Mammary epithelial cell (primary cell): ENCODE measurements at regions of chr10 and their contacts with region 1.

Region 1: GRCh38 chr10:95430231-95430951 is 130.8 kb downstream of the SORBS1 start:
- DNase-seq: peak; percentile 62
- H3K4me3 ChIP-seq: no peak overlapping the region
- H3K27ac ChIP-seq: no peak overlapping the region
- H3K4me1 ChIP-seq: peaks cover 16% of the 10 kb centered on the region
- H3K27me3 ChIP-seq: no peaks in the 10 kb centered on the region
- CTCF ChIP-seq: peak; percentile 88 to 94

Region 2: DNA sequence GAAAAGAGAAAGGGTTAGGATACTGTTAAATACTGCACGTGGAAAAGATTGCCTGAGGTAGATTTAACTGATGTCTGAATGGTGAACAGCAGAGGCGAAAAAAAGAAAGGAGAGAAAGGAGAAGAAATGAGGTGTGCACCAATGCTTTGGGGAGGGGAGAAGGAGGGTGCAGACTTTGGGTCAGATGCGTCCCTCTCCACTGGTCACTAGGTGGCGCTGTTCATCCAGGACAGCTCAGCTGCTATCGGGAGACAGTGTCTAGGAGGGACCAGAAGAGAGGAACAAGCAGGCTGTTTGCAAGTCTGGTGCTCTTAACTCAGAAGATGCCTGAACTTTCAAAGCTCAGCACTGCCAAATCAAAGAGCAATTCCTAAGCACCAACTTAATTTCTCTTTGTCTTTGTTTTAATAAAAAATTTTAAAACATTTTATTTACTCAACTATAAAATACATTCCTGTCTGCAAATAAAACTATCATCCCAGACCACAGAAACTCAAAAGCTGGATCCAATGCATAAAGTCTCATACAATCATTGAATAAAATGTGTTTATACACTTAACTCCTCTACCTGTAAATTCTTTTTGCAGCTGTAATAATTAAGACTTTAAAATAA is 55.7 kb before region 1 on chr10:
- CTCF ChIA-PET with region 1: no interaction called
- dilution Hi-C with region 1: no loop called
- in situ Hi-C with region 1: loop called in 1 of 2 experiments (anchors 10 kb)
- intact Hi-C with region 1: loop called (anchors 1 kb)
- DNase-seq: peak; percentile 68
- H3K4me3 ChIP-seq: no peak overlapping the region
- H3K27ac ChIP-seq: no peak overlapping the region
- H3K4me1 ChIP-seq: no peaks in the 10 kb centered on the region
- H3K27me3 ChIP-seq: no peaks in the 10 kb centered on the region
- CTCF ChIP-seq: peak; percentile 95 to 99

Region 3: DNA sequence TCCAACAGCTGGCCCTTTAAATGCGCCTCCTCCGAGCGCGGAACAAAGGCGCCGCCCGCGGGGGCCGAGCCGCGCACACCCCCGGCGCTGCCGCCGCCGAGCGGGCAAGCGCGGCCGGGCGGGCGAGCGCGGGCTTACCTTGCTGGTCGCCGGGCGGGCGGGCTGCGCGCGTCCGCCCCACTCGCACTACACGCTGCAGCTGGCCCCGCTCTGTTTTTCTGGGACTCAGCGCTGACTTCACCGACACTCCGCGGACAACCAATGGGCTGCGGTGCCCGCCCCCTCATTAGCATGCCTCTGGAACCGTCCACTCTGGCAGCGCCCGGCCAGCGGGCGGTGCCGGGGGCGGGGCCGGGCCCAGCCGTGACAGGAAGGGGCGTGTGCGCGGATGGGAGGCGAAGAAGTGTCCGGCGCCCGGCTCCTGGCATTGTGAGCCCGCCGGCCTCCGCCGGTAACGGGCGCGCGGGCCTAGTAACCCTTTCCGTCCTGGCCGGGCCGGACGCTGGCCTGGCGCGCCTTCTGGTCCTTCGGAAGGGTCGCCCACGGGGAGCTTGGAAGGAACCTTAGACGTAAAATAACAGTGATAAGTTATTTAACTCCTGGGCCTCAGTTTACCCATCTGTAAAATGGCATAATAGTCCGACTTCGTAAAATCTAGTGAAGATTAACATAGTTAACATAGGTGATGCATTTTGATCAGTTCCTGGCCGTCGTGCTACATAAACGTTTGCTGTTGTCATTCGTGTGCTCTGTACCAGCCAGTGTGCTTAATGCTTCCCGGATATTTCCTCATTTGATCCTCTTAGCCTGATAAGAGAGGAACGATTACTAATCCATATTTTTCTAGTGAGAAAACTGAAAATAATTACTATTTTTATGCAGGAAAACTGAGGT is 131.0 kb after region 1 on chr10 and contains the start of gene SORBS1:
- CTCF ChIA-PET with region 1: no interaction called
- dilution Hi-C with region 1: no loop called
- in situ Hi-C with region 1: no loop called
- intact Hi-C with region 1: loop called (anchors 1 kb)
- DNase-seq: peak; percentile 98
- H3K4me3 ChIP-seq: peak within 1 kb of the TSS; percentile 84 to 87 (median 84)
- H3K27ac ChIP-seq: peak within 1 kb of the TSS; percentile 25
- H3K4me1 ChIP-seq: peaks cover 11% of the 10 kb centered on the region
- H3K27me3 ChIP-seq: peaks cover 5% of the 10 kb centered on the region
- CTCF ChIP-seq: no peak
- total RNA-seq, gene SORBS1: 1.6 to 9.8 TPM